ENCODE measurements at regions of chr10 and their contacts with region 1.

Region 1: DNA sequence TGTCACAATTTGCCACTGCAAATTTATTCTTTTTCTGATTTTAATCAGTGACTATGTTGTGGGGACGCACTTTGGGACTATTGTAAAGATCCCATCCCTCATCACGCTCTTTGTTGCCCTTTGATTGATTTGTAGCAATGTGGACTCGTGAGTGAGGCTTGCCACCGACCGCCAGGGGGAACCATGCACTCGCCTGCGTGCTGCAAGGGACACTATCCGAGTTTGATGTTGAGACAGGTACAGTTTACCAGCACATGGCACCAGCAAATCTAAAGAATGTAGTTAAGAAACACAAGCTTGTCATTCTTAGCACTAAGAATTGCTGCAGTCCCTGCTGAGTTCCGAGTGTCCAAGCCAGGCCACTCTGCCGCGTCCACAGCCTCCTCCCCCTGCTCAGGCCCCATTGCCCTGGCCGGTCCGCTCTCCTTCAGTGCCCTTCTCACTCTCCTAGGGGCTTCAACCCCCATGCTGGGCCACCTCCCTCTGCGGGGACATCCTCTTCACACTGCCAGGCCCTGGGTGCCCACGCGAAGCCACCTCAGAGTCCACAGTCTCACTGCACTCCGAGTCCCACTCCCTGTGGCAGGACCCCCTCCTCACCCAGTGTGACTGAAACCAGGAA is 2.0 kb upstream of the SFTPA2 start:
- DNase-seq: peak; percentile 71
- H3K4me3 ChIP-seq: no peak overlapping the region
- H3K27ac ChIP-seq: no peak overlapping the region
- H3K4me1 ChIP-seq: peaks cover 0 to 18% (median 8%) of the 10 kb centered on the region in 4 donors
- H3K27me3 ChIP-seq: no peaks in the 10 kb centered on the region
- CTCF ChIP-seq: peak; percentile 60 to 73 (median 72)
- EP300 ChIP-seq: no peak
- POLR2A ChIP-seq: no peak

Region 2: DNA sequence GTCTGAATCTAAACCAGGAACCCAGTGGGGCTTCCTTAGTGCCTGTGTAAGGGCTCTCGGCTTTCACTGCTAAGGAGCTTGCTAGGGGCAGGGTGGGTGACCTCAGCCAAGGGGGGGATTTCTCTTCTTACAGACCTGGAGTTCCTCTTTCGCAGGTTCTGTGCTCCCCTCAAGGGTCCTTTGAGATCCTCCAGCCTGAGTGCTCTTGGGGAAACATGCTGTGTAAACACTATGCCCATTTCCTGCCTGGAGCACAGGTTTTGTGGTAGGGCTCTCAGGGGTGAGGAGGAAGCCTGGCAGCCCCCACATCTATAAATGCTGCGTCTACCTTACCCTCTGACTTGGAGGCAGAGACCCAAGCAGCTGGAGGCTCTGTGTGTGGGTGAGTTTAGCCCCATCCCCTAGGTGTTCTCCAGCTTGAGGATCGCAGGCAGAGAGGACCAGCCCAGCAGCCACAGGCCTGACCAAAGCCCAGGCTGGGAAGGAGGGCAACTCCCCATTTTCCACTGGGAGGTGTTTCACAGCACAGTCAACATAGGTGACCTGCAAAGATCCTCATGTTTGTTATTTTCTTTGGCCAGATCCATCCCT is 48.5 kb after region 1 on chr10 and contains the start of gene SFTPA1:
- in situ Hi-C with region 1: loop called in 1 of 4 experiments (anchors 5 kb)
- intact Hi-C with region 1: no loop called
- DNase-seq: no peak
- H3K4me3 ChIP-seq: no peak within 1 kb of the TSS
- H3K27ac ChIP-seq: no peak within 1 kb of the TSS
- H3K4me1 ChIP-seq: no peaks in the 10 kb centered on the region
- H3K27me3 ChIP-seq: no peaks in the 10 kb centered on the region
- CTCF ChIP-seq: no peak
- EP300 ChIP-seq: no peak
- POLR2A ChIP-seq: no peak
- total RNA-seq, gene SFTPA1: not detected

Region 3: DNA sequence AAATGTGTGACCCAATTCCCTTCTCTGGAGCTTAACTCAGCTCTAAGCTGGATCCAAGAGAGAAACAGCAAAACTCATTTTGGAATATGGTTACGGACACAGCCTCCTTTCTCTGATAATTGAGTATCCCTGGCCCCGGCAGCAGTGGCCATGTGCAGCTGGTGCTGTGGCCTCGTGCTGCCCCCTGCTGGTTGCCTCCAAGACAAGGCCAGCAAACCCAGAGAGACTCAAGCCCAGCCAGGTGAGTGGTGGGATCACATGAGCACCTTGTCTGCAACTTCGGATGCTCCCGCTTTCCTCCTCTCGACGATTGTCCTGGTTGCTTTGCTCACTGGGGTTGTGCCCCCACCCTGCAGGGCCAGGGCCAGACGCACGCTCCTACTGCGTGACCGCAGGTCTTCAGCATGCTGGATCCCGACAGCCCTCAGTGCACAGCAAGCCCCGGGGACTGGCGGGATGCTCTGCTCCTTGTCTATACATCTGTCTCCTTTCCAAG is 367.2 kb after region 1 on chr10:
- in situ Hi-C with region 1: loop called in 3 of 4 experiments (anchors 25 kb)
- intact Hi-C with region 1: no loop called
- DNase-seq: peak; percentile 83
- H3K4me3 ChIP-seq: no peak overlapping the region
- H3K27ac ChIP-seq: no peak overlapping the region
- H3K4me1 ChIP-seq: peaks cover 0 to 6% (median 0%) of the 10 kb centered on the region in 4 donors
- H3K27me3 ChIP-seq: peaks cover 14% of the 10 kb centered on the region
- CTCF ChIP-seq: peak; percentile 87 to 91 (median 89)
- EP300 ChIP-seq: no peak
- POLR2A ChIP-seq: no peak

Region 4: GRCh38 chr10:80168679-80169380 is 606.6 kb after region 1 on chr10:
- in situ Hi-C with region 1: no loop called
- intact Hi-C with region 1: no loop called
- DNase-seq: no peak
- H3K4me3 ChIP-seq: no peak overlapping the region
- H3K27ac ChIP-seq: peak overlapping the region in 3 of 4 donors; percentile 20 to 73 (median 22)
- H3K4me1 ChIP-seq: peaks cover 39 to 88% (median 55%) of the 10 kb centered on the region in 4 donors
- H3K27me3 ChIP-seq: no peaks in the 10 kb centered on the region
- CTCF ChIP-seq: peak in 1 of 5 experiments; percentile 13
- EP300 ChIP-seq: no peak
- POLR2A ChIP-seq: no peak

Region 5: DNA sequence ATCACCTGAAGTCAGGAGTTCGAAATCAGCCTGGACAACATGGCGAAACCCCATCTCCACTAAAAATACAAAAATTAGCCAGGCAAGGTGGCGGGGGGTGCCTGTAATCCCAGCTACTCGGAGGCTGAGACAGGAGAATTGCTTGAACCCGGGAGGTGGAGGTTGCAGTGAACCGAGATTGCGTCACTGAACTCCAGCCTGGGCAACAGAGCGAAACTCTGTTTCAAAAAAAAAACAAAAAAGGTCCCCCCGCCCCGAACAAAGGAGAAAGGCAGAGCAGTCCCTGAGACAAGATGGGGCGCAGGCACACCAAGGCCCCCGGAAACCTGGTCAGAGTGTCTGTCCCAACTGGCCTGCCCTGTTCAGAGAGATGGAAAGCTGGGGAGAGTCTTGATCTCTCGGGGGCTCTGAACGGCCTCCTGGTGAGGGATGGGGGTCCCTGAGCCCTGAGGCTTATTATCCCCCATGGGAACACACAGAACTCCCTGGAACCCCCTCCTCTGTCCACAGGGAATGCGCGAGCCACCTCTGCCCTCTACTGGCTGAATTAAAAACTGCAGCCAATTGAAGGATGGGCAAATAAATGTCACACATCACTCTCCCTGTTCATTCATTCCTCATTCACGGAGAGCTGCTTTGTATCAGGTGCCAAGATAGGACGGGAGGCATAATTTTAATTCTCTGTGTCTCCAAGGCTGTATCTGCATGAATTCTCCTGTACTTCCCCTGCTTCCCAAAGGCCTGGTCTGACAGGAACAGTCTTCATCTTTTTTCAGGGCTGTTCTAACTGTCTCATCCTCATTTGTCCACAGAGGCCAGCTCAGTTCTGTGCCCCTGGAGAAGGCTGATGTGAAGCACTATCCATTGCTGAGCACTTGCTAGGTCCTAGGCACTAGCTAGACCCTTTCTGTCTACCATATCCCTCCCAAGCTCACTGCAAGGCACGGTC is 698.3 kb after region 1 on chr10:
- in situ Hi-C with region 1: loop called in 1 of 4 experiments (anchors 25 kb)
- intact Hi-C with region 1: no loop called
- DNase-seq: no peak
- H3K4me3 ChIP-seq: no peak overlapping the region
- H3K27ac ChIP-seq: no peak overlapping the region
- H3K4me1 ChIP-seq: no peaks in the 10 kb centered on the region
- H3K27me3 ChIP-seq: no peaks in the 10 kb centered on the region
- CTCF ChIP-seq: peak; percentile 60 to 86 (median 65)
- EP300 ChIP-seq: no peak
- POLR2A ChIP-seq: no peak